ENCODE measurements at regions of chr11 and their contacts with region 1.

Region 1: DNA sequence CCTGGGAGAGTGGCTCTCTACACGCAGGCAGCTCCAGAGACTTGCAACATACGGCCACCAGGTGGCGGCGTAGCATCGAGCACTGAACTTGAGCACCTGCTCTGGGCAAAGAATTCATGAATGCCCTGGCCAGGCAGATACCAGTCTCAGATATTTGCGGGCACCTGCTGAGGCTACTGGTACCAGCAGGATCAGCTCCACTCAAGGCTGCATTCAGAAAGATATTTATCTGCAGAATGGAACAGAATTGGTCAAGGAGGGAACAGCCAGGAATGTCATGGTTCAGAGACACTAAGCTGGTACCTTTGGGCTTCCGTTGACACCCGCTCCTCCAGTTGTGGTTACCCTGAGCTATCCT is 10.8 kb upstream of the CCDC86 start:
- DNase-seq: peak; percentile 83
- H3K4me3 ChIP-seq: no peak overlapping the region
- H3K27ac ChIP-seq: no peak overlapping the region
- H3K4me1 ChIP-seq: peaks cover 21% of the 10 kb centered on the region
- H3K27me3 ChIP-seq: no peaks in the 10 kb centered on the region
- CTCF ChIP-seq: peak; percentile 89 to 90
- POLR2A ChIP-seq: no peak

Region 2: DNA sequence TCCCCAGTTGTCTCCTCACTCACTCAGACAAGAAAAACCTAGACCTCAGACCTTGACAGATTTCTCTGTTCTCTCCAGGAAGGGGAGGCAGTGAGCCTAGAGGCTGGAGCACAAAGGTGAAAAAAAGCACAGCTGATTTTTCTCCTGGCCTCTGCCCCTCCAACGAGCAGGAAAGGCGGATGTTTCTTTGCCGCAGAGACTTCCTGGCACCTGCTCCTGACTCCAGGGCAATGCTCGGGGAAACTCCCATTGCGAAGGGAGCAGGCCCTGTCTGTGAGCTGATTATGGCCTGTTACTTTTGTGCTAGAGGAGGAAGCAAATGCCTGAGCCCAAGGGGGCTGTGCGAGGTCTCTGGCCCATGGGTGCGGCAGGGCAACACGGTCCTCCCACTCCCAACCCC is 20.6 kb before region 1 on chr11:
- CTCF ChIA-PET with region 1: interaction called, 17 read pairs
- POLR2A ChIA-PET with region 1: no interaction called
- dilution Hi-C with region 1: no loop called
- intact Hi-C with region 1: loop called (anchors 1 kb)
- DNase-seq: peak; percentile 82
- H3K4me3 ChIP-seq: no peak overlapping the region
- H3K27ac ChIP-seq: peak overlapping the region; percentile 44
- H3K4me1 ChIP-seq: peaks cover 12% of the 10 kb centered on the region
- H3K27me3 ChIP-seq: no peaks in the 10 kb centered on the region
- CTCF ChIP-seq: no peak
- POLR2A ChIP-seq: no peak

Region 3: GRCh38 chr11:60866911-60867870 is 36.1 kb after region 1 on chr11 and contains the start of gene ZP1:
- CTCF ChIA-PET with region 1: interaction called, 12 read pairs
- POLR2A ChIA-PET with region 1: no interaction called
- dilution Hi-C with region 1: no loop called
- intact Hi-C with region 1: no loop called
- DNase-seq: no peak
- H3K4me3 ChIP-seq: no peak within 1 kb of the TSS
- H3K27ac ChIP-seq: no peak within 1 kb of the TSS
- H3K4me1 ChIP-seq: no peaks in the 10 kb centered on the region
- H3K27me3 ChIP-seq: no peaks in the 10 kb centered on the region
- CTCF ChIP-seq: no peak
- POLR2A ChIP-seq: no peak
- total RNA-seq, gene ZP1: not detected in 2 replicates

Region 4: GRCh38 chr11:60887556-60887955 is 56.4 kb after region 1 on chr11:
- CTCF ChIA-PET with region 1: interaction called, 607 read pairs
- POLR2A ChIA-PET with region 1: interaction called, 3 read pairs
- dilution Hi-C with region 1: no loop called
- intact Hi-C with region 1: loop called (anchors 1 kb)
- DNase-seq: peak; percentile 56
- H3K4me3 ChIP-seq: no peak overlapping the region
- H3K27ac ChIP-seq: no peak overlapping the region
- H3K4me1 ChIP-seq: peaks cover 20% of the 10 kb centered on the region
- H3K27me3 ChIP-seq: no peaks in the 10 kb centered on the region
- CTCF ChIP-seq: peak; percentile 53 to 66
- POLR2A ChIP-seq: no peak

Region 5: DNA sequence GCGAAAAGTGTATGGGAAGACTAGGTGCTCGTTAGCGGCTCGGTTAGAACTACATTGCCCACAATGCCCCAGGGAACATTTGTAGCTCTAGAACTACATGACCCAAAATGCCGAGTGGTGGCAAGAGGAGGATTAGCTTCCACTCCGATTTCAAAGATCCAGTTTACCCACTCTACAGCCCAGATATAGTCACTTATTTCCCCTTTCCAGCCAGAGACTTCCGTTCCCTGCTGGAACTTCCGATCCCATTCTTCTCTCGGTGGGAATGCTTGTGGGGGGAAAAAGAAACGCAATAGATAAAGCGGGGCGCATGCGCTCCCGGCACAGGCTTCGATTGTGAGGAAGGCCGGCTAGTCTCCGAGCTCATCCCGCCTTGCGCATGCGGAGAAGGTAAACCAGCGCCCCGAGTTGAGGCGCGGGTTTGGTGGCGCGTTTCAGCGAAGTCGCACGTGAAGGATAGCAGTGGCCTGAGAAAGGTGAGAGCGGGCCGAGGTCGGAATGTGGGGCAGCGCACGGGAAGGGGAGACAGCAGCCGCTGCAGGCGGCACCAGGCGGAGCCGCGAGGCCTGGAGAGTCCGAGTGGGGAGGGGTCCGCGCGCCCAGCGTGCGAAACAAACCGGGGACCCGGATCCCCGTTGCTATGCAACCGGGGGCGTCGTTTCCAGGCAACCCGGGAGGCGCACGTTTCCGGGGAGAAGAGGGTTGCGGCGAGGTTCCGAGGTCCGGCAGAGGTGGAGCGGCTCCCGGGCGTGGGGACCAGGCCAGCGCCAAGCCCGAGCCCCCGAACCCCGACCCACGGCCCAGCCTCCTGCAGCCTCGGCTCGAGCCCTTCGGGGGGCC is 82.9 kb after region 1 on chr11 and contains the start of gene TMEM109:
- CTCF ChIA-PET with region 1: interaction called, 25 read pairs
- POLR2A ChIA-PET with region 1: no interaction called
- dilution Hi-C with region 1: no loop called
- intact Hi-C with region 1: no loop called
- DNase-seq: peak; percentile 98
- H3K4me3 ChIP-seq: peak within 1 kb of the TSS; percentile 43 to 79 (median 76)
- H3K27ac ChIP-seq: peak within 1 kb of the TSS; percentile 65
- H3K4me1 ChIP-seq: peaks cover 36% of the 10 kb centered on the region
- H3K27me3 ChIP-seq: peaks cover 0 to 2% of the 10 kb centered on the region in 2 experiments
- CTCF ChIP-seq: no peak
- POLR2A ChIP-seq: no peak
- total RNA-seq, gene TMEM109: 172 and 192 TPM in 2 replicates

Region 6: DNA sequence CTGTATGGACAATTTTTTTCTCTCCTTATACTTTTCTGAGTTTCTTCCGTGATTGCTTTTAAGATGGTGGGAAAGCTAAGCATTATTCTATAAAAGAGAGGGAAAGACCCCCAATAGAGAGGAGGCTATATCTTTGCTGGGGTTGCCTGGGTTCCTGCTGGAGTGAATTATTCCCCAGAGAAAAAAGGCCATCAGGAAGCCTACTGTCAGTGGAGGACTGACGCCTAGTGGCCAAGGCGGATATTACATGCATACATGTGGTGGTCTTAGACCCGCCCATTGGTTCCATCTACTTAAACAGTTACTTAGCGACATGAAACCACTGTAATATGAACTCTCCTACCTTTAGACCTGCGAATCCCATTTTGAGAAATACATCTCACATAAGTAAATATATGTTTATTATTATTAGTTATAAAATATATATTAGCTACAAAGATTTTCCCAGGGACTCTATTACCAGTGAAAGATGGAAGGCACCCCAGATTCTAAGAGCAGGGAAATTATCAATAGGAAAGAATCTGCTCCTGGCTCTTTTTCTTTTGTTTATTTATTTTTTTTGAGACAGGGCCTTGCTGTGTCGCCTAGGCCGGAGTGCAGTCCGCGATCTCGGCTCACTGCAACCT is 356.5 kb after region 1 on chr11:
- CTCF ChIA-PET with region 1: interaction called, 17 read pairs
- POLR2A ChIA-PET with region 1: no interaction called
- dilution Hi-C with region 1: no loop called
- intact Hi-C with region 1: loop called (anchors 2 kb)
- DNase-seq: peak; percentile 81
- H3K4me3 ChIP-seq: no peak overlapping the region
- H3K27ac ChIP-seq: no peak overlapping the region
- H3K4me1 ChIP-seq: no peaks in the 10 kb centered on the region
- H3K27me3 ChIP-seq: no peaks in the 10 kb centered on the region
- CTCF ChIP-seq: peak; percentile 84 to 90
- POLR2A ChIP-seq: no peak